OCI-LY7 (cell line): ENCODE measurements at regions of chr4 and their contacts with region 1.

Region 1: DNA sequence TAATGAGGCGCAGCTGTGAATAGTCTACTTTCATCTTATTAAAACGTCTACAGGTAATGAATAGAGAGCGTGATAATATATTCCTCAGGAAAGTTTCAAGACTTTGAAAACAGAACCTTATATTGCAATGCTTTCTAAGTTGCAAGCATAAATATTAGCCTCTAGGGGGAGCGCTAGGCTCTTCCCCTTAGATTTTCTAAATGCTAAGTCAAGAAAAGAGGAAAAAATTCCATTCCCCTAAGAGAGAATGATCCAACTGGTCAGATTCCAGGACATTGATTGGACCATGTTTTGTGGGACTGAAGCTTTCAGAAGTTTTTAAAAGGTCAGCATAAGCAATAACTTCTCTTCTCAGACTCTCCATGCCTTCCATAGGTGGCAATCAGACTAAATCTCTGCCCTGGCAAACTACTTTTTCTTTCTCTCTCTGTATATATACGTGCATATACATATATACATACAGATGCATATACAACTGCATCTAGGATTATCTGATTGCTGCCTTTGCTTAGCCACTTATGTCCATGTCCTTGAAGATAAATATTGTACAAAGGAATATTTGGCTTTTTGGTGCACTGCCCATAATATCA is 492.9 kb downstream of the INPP4B start:
- DNase-seq: peak; percentile 44
- H3K4me3 ChIP-seq: no peak overlapping the region
- H3K27ac ChIP-seq: no peak overlapping the region
- H3K4me1 ChIP-seq: no peaks in the 10 kb centered on the region
- CTCF ChIP-seq: peak; percentile 90

Region 2: GRCh38 chr4:142719854-142720541 is 366.8 kb after region 1 on chr4:
- CTCF ChIA-PET with region 1: no interaction called
- POLR2A ChIA-PET with region 1: interaction called, 3 read pairs
- intact Hi-C with region 1: loop called (anchors 5 kb)
- DNase-seq: peak; percentile 5
- H3K4me3 ChIP-seq: no peak overlapping the region
- H3K27ac ChIP-seq: no peak overlapping the region
- H3K4me1 ChIP-seq: no peaks in the 10 kb centered on the region
- CTCF ChIP-seq: peak; percentile 76

Region 3: DNA sequence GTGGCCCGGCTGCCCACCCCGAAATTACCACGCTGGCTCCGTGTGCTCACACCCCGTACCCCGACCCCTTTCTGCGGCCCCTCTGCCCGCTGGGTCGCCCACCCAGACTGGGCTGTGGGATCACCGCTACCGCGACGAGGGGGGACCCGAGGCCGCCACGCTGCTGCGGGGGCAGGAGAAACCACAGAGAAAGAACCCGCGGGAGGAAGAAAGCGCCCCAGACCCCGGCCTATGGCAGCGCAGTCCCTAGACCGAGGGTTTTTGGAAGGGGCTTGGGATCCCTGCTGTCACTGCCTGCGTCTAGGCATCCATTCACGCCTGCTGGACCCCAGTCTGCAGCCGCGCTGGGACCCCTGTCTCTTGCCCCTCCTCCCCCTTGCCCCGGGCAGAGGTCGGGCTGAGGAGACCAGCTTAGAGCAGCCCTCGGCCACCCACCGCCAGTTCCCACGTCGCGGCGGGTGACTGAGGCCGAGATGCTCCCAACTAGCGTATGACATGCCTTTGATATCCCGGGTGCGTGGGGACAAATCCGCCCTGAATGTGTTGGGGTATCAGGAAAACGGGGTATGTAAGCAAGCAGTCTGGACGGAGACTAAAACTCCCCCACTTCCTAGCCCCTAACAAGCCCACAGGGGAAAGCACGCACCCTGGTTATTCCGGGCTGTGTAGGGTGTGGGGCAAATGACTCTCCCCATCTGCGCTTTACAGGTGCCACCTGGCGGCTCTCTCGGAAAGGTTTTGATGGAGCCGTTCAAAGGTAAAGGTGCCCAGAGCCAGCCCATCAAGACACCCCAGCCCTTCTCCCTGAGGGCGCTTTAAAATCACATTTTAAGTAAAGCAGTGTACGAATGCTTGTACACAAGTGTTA is 493.7 kb after region 1 on chr4:
- CTCF ChIA-PET with region 1: no interaction called
- POLR2A ChIA-PET with region 1: no interaction called
- intact Hi-C with region 1: loop called (anchors 10 kb)
- DNase-seq: peak; percentile 7
- H3K4me3 ChIP-seq: no peak overlapping the region
- H3K27ac ChIP-seq: no peak overlapping the region
- H3K4me1 ChIP-seq: no peaks in the 10 kb centered on the region
- CTCF ChIP-seq: peak; percentile 37; the same call in 1 of the 2 replicates